HEK293 (cell line): ENCODE measurements at regions of chr3 and their contacts with region 1.

Region 1: GRCh38 chr3:48439820-48440589 is at the starts of genes CCDC51 and TMA7:
- H3K4me3 ChIP-seq: peak within 1 kb of the TSS; percentile 84
- H3K27ac ChIP-seq: peak within 1 kb of the TSS; percentile 67
- H3K4me1 ChIP-seq: no peaks in the 10 kb centered on the region
- CTCF ChIP-seq: peak; percentile 48; the same call in 1 of the 2 replicates

Region 2: DNA sequence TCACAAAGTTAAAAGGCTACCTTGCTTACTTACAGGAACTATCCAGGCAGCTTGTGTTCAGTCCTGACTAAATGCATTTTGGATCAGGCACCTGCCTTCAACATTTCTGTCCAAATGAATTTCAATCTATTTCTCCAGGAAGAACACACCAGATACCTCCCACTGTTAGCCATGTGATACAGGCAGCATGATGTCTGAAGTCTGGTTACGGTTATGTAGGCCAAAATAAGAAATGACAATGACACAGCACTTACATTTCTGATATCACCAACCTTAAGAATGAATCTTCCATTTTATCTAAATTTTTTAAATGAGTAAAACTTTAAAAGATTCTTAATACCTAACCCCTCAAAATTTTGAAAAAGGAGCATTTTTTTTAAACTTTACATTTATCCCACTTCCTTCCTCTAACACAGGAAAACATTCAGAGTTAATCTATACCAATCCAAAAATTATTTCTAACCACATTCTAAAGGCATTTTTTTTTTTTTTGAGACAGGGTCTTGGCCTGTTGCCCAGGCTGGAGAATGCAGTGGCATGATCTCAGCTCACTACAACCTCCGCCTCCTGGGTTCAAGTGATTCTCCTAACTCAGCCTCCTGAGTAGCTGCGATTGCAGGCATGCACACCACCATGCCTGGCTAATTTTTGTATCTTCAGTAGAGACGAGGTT is 423.6 kb before region 1 on chr3 and contains the start of gene MAP4:
- CTCF ChIA-PET with region 1: no interaction called
- POLR2A ChIA-PET with region 1: no interaction called
- H3K4me3 ChIP-seq: no peak within 1 kb of the TSS
- H3K27ac ChIP-seq: no peak within 1 kb of the TSS
- H3K4me1 ChIP-seq: peaks cover 13% of the 10 kb centered on the region
- CTCF ChIP-seq: no peak

Region 3: DNA sequence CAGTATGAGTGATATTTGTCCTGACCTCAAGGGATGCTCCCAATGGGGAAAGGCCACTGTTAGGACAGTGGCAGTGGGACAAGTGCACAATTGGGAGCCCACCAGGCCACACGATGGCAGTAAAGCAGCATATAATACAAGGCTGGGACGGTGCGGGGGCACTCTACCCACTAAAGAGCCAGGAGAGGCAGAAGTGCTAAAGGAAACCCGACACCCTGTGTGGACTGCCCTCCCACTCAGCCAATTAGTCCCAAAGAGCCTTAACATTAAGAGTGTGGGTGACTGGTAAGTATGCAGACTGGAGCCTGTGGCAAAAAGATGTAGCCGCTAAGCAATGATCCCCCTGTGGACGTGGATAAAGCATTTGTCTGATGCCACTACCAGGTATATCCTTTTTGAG is 207.3 kb before region 1 on chr3:
- CTCF ChIA-PET with region 1: interaction called, 20 read pairs
- POLR2A ChIA-PET with region 1: no interaction called
- H3K4me3 ChIP-seq: no peak overlapping the region
- H3K27ac ChIP-seq: no peak overlapping the region
- H3K4me1 ChIP-seq: no peaks in the 10 kb centered on the region
- CTCF ChIP-seq: peak; percentile 84

Region 4: GRCh38 chr3:48285132-48285531 is 154.9 kb before region 1 on chr3:
- CTCF ChIA-PET with region 1: interaction called, 21 read pairs
- POLR2A ChIA-PET with region 1: no interaction called
- H3K4me3 ChIP-seq: no peak overlapping the region
- H3K27ac ChIP-seq: no peak overlapping the region
- H3K4me1 ChIP-seq: no peaks in the 10 kb centered on the region
- CTCF ChIP-seq: no peak

Region 5: DNA sequence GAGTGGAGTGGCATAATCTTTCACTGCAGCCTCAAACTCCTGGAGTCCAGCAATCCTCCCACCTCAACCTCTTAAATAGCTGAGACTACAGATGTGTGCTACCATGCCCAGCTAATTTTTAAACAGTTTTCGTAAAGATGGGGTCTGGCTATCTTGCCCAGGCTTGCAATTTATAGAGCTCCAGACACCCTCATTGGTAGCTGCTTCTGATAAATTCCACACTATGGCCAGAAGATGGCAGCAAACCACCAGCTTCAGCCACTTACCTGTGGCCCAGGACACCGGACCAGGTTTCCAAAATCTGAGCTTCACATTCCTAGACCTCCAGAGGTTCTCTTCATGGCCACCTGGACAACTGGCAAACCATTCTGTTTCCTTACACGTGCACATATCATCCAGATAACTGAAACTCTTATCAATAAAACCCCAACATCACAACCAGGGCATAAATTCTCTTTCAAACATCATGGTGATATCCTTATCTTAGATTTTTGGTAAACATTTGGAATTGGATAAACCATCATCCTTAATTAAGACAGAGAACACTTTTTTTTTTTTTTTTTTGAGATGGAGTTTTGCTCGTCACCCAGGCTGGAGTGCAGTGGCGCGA is 39.1 kb before region 1 on chr3:
- CTCF ChIA-PET with region 1: interaction called, 238 read pairs
- POLR2A ChIA-PET with region 1: interaction called, 13 read pairs
- H3K4me3 ChIP-seq: no peak overlapping the region
- H3K27ac ChIP-seq: no peak overlapping the region
- H3K4me1 ChIP-seq: no peaks in the 10 kb centered on the region
- CTCF ChIP-seq: no peak

Region 6: GRCh38 chr3:48472915-48473616 is 33.1 kb after region 1 on chr3:
- CTCF ChIA-PET with region 1: interaction called, 4 read pairs
- POLR2A ChIA-PET with region 1: interaction called, 13 read pairs
- H3K4me3 ChIP-seq: peak overlapping the region; percentile 58
- H3K27ac ChIP-seq: peak overlapping the region; percentile 84
- H3K4me1 ChIP-seq: no peaks in the 10 kb centered on the region
- CTCF ChIP-seq: peak; percentile 94

Region 7: DNA sequence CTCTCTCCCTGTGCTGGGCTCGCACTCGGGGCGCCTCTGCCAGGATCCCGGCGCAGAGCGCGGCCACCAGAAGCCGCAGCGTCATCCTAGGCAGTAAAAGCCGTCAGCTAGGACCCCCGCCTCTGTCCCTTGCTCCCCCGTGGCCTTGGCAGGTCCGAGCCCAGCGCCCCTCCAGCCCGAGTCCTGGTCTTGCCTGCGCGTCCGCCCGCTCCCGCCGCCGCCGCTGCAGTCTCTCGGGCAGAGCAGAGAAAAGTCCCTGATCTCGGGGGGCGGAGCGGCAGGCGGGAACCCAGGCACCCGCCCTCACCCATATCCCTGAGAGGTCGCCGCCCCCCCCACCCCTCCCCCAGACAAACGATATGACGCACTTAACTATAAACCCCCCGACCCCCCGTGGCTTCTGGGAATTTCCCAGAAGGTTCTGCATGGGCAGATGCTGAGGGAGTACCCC is 155.1 kb after region 1 on chr3 and contains the start of gene COL7A1:
- CTCF ChIA-PET with region 1: no interaction called
- POLR2A ChIA-PET with region 1: no interaction called
- H3K4me3 ChIP-seq: peak within 1 kb of the TSS; percentile 32
- H3K27ac ChIP-seq: no peak within 1 kb of the TSS; the same call in 1 of the 2 replicates
- H3K4me1 ChIP-seq: no peaks in the 10 kb centered on the region; the same call in 1 of the 2 replicates
- CTCF ChIP-seq: no peak

Region 8: GRCh38 chr3:48635222-48636021 is 195.4 kb after region 1 on chr3 and contains the start of gene SLC26A6:
- CTCF ChIA-PET with region 1: interaction called, 10 read pairs
- POLR2A ChIA-PET with region 1: no interaction called
- H3K4me3 ChIP-seq: peak within 1 kb of the TSS; percentile 75
- H3K27ac ChIP-seq: peak within 1 kb of the TSS; percentile 55; the same call in 1 of the 2 replicates
- H3K4me1 ChIP-seq: no peaks in the 10 kb centered on the region
- CTCF ChIP-seq: no peak; the same call in 1 of the 2 replicates